ENCODE measurements at regions of chr21 and their contacts with region 1.

Region 1: GRCh38 chr21:32826329-32827167 is 55.0 kb upstream of the PAXBP1 start:
- DNase-seq: peak in 1 of 3 donors; percentile 83
- ATAC-seq: peak; percentile 94
- H3K4me3 ChIP-seq: no peak overlapping the region
- H3K4me1 ChIP-seq: no peaks in the 10 kb centered on the region
- CTCF ChIP-seq: peak; percentile 36

Region 2: DNA sequence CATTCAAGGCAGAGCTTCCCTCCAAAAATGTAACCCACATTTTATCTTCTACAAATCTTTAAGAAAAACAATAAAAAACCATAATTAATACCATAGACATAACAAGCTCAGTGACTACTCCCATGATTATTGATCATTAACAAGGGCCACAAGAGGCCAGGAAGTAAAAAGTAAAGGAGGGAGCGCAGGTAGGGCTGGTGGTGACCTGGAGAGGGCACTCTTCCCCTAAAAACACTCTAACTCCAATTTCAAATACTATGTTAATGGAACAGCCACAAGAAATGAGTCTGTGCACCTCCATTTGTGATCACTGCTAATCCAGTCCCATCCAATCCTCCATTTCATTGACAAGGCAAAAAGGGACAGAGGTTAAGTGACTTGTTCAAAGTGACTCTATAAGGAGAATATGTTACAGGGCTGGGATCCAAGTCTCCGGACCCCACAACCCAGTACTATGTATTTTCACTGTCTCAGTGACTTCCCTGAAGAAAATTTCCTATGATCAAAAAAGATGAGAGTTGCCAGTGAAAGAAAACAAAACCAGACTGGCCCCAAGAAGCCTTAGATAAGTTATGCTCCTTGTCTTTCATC is 173.1 kb before region 1 on chr21:
- intact Hi-C with region 1: loop called in 1 of 2 experiments (anchors 5 kb)
- DNase-seq: peak in 1 of 3 donors; percentile 51
- ATAC-seq: peak; percentile 82
- H3K4me3 ChIP-seq: no peak overlapping the region
- H3K4me1 ChIP-seq: no peaks in the 10 kb centered on the region
- CTCF ChIP-seq: peak; percentile 46

Region 3: GRCh38 chr21:32782698-32783097 is 43.9 kb before region 1 on chr21:
- intact Hi-C with region 1: loop called in 1 of 2 experiments (anchors 5 kb)
- DNase-seq: no peak
- ATAC-seq: no peak
- H3K4me3 ChIP-seq: no peak overlapping the region
- H3K4me1 ChIP-seq: no peaks in the 10 kb centered on the region
- CTCF ChIP-seq: no peak